ENCODE measurements at regions of chr13 and their contacts with region 1.

Region 1: DNA sequence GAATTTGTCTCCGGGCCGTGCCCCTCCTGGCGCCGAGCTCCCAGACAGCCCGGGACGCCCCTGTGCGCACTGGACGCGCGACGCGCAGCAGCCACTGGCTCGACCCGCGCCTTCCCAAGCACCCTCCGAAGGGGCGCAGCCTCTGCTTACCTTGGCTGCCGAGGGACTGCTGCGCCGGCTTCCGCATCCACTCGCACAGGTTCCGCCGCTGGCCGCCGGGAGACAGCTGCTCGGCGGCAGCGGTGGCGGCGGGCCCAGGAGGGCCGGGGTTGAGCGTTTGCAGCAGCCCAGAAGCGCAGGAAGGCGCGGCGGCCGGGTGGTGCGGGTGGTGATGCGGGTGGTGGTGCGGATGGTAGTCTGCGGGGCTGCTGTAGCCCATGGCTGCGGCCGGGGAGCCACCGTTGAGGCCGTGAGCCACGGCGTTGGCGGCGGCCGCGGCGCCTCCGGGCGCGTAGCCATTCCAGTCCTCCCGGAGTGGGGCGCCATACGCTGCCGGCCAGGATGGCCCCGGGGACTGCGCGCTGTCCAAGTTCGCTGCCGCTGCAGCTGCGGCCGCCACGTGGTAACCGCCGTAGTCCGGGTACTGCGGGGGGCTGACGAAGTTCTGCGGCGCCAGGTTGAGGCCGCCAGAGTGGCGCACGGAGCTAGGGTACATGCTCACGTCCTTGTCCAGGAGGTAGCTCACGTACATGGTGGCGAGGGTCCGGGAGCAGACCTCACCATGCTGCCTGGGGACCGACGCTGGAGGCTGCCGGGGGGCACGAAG is 616 bp downstream of the CDX2 start:
- DNase-seq: no peak
- H3K4me3 Mint-ChIP-seq: no peak overlapping the region
- H3K27ac Mint-ChIP-seq: no peak overlapping the region
- H3K4me1 Mint-ChIP-seq: peaks cover 26% of the 10 kb centered on the region
- H3K27me3 Mint-ChIP-seq: peaks cover 71% of the 10 kb centered on the region

Region 2: DNA sequence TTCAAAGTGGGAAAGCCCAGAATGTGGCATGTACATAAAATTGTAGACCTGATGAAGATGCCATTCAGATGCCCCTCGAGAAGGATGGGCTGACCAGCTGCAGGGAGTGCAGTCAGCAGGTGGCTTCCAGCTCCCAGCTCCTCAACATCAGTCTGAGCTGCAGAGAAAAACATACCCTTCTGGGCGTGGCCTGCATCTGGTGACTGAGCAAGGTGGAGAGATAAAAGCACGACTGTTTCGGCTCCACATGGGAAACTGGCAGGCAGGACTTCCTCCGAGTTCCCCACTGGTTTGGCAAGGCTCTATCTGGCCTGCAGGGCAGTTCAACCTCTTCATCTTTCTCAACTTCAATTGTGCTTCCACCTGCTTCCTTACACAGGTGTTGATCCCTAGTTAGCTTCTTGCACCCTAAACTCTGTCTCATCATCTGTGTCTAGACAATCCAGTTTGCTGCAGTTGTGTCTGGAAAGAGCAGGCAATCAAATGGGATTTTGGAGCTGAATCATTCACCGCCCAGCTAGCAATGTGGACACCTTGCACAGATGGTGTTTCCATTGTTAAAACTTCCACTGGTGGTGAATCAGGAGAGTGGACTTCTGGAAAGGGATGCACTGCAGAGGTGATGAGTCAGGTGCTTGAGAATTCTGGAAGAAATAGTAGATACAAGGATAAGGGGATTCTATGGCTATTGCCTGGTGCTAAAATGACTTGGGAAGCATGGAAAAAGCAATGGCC is 290.0 kb before region 1 on chr13:
- CTCF ChIA-PET with region 1: no interaction called
- POLR2A ChIA-PET with region 1: no interaction called
- intact Hi-C with region 1: no loop called
- DNase-seq: no peak
- H3K4me3 Mint-ChIP-seq: no peak overlapping the region
- H3K27ac Mint-ChIP-seq: no peak overlapping the region
- H3K4me1 Mint-ChIP-seq: no peaks in the 10 kb centered on the region
- H3K27me3 Mint-ChIP-seq: peaks cover 16% of the 10 kb centered on the region

Region 3: DNA sequence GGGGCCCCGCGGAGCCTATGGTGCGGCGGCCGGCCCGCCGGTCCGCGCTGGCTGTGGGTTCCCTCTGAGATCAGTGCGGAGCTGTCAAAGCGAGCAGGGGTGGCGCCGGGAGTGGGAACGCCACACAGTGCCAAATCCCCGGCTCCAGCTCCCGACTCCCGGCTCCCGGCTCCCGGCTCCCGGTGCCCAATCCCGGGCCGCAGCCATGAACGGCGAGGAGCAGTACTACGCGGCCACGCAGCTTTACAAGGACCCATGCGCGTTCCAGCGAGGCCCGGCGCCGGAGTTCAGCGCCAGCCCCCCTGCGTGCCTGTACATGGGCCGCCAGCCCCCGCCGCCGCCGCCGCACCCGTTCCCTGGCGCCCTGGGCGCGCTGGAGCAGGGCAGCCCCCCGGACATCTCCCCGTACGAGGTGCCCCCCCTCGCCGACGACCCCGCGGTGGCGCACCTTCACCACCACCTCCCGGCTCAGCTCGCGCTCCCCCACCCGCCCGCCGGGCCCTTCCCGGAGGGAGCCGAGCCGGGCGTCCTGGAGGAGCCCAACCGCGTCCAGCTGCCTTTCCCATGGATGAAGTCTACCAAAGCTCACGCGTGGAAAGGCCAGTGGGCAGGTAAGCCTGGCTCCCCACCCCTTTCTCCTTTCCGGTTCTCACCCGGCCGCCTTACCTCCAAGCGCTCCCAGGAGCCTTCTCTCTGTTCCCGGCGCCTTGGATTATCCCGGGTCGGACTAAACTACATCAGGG is 48.4 kb before region 1 on chr13 and contains the start of gene PDX1:
- CTCF ChIA-PET with region 1: interaction called, 5 read pairs
- POLR2A ChIA-PET with region 1: interaction called, 3 read pairs
- intact Hi-C with region 1: loop called (anchors 2 kb)
- DNase-seq: no peak
- H3K4me3 Mint-ChIP-seq: peak within 1 kb of the TSS; percentile 66
- H3K27ac Mint-ChIP-seq: peak within 1 kb of the TSS; percentile 6
- H3K4me1 Mint-ChIP-seq: peaks cover 37% of the 10 kb centered on the region
- H3K27me3 Mint-ChIP-seq: peaks cover 71% of the 10 kb centered on the region
- total RNA-seq, gene PDX1: not detected

Region 4: DNA sequence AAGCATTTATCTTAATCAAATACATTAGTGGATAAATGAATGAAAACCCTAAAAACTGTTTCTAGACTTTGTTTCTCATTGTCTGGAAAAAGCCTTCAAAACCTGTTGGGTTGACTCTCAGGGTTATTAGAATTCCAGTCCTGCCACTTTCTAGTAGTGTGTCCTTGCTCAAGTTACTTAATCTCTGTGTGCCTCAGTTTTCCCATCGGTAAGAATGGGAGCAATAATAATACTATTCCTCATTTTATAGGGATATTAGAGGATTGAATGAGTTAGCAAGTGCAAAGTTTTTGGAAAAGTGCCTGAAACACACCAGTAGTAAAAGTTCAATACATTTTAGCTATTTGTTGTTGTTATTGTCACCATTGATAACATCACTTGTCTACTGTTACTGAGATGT is 17.1 kb after region 1 on chr13:
- CTCF ChIA-PET with region 1: interaction called, 11 read pairs
- POLR2A ChIA-PET with region 1: no interaction called
- intact Hi-C with region 1: no loop called
- DNase-seq: no peak
- H3K4me3 Mint-ChIP-seq: no peak overlapping the region
- H3K27ac Mint-ChIP-seq: no peak overlapping the region
- H3K4me1 Mint-ChIP-seq: peaks cover 1% of the 10 kb centered on the region
- H3K27me3 Mint-ChIP-seq: peaks cover 46% of the 10 kb centered on the region

Region 5: GRCh38 chr13:28035139-28035782 is 66.8 kb after region 1 on chr13:
- CTCF ChIA-PET with region 1: no interaction called
- POLR2A ChIA-PET with region 1: no interaction called
- intact Hi-C with region 1: no loop called
- DNase-seq: no peak
- H3K4me3 Mint-ChIP-seq: no peak overlapping the region
- H3K27ac Mint-ChIP-seq: no peak overlapping the region
- H3K4me1 Mint-ChIP-seq: peaks cover 2% of the 10 kb centered on the region
- H3K27me3 Mint-ChIP-seq: peaks cover 35% of the 10 kb centered on the region

Measured in activated CD4-positive, alpha-beta memory T cell treated with anti-CD3 and anti-CD28 coated beads for 36 hours (primary cell).